ENCODE measurements at regions of chrX and their contacts with region 1.

Region 1: DNA sequence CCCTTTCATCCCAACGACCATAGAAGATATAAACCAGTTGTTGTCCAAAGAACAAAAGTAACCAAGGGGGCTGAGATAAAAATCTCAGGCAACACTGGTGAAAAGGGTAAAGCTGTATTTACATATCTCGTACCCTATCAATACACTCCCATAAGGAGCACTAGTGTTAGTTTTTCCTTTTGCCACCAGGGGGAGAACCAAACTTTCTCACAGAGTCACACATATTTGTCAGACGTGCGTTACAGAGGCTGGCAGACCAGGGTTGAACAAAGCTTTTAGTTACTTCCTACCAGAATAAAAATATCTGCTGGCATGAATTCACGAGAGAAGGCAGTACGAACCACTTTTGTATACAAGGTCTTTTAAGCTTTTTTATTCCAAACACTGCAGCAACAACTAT is 88.3 kb downstream of the AMELX start:
- DNase-seq: peak in 1 of 2 donors; percentile 50
- ATAC-seq: peak; percentile 86
- H3K4me3 ChIP-seq: no peak overlapping the region
- H3K27ac ChIP-seq: peak overlapping the region in 1 of 2 donors; percentile 57
- H3K4me1 ChIP-seq: peaks cover 2 to 7% of the 10 kb centered on the region in 2 donors
- H3K27me3 ChIP-seq: no peaks in the 10 kb centered on the region

Region 2: GRCh38 chrX:11143931-11144678 is 237.4 kb before region 1 on chrX:
- intact Hi-C with region 1: loop called in 1 of 2 experiments (anchors 10 kb)
- DNase-seq: no peak
- ATAC-seq: peak; percentile 76
- H3K4me3 ChIP-seq: no peak overlapping the region
- H3K27ac ChIP-seq: no peak overlapping the region
- H3K4me1 ChIP-seq: no peaks in the 10 kb centered on the region
- H3K27me3 ChIP-seq: no peaks in the 10 kb centered on the region

Measured in aorta (tissue), 5 donors.